ENCODE measurements at regions of chr20 and their contacts with region 1.

Region 1: DNA sequence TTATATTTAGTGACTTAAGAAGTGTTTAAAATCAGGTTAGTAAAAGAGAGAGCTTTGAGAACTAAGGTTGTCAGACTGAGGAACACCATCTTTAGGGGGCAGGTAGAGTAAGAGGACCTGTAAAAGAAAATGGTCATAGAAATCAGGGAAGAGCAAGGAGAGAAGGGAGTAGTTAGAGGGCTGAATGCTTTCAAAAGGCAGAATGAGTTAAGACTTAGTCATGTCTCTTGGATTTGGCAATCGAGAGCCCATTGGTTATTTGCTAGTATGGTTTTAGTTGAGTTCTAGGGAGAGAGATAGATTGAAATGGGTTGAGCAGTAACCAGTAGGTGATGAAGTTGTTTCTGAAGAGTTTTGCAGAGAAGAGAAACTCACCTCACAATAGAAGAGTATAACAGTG is 51.1 kb downstream of the RALGAPB start:
- DNase-seq: peak; percentile 71
- H3K4me3 Mint-ChIP-seq: no peak overlapping the region
- H3K27ac Mint-ChIP-seq: peak overlapping the region; percentile 3
- H3K4me1 Mint-ChIP-seq: peaks cover 14% of the 10 kb centered on the region
- H3K27me3 Mint-ChIP-seq: no peaks in the 10 kb centered on the region
- CTCF ChIP-seq: no peak

Region 2: DNA sequence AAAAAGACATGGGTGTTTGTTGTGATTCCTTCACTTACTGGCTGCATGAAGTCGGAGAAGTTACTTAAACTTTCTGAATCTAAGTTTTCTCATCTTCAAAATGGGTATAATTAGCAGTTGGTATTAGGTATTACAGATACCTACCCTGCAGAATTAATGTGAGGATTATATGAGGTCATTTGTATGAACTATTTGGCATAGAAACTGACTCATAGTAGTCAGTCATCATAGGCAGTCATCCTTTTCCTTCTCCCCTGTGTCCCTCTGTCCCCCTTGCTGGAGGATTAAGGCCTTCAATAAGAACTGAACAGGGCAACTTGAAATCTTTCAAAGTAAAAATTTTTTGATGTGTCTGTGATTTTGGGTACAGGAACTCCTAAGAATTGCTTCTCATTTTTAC is 24.8 kb before region 1 on chr20:
- CTCF ChIA-PET with region 1: interaction called, 5 read pairs
- POLR2A ChIA-PET with region 1: interaction called, 15 read pairs
- intact Hi-C with region 1: no loop called
- DNase-seq: no peak
- H3K4me3 Mint-ChIP-seq: no peak overlapping the region
- H3K27ac Mint-ChIP-seq: no peak overlapping the region
- H3K4me1 Mint-ChIP-seq: peaks cover 6% of the 10 kb centered on the region
- H3K27me3 Mint-ChIP-seq: no peaks in the 10 kb centered on the region
- CTCF ChIP-seq: no peak

Region 3: GRCh38 chr20:38534756-38535155 is 11.1 kb after region 1 on chr20:
- CTCF ChIA-PET with region 1: interaction called, 6 read pairs
- POLR2A ChIA-PET with region 1: interaction called, 18 read pairs
- intact Hi-C with region 1: no loop called
- DNase-seq: no peak
- H3K4me3 Mint-ChIP-seq: no peak overlapping the region
- H3K27ac Mint-ChIP-seq: no peak overlapping the region
- H3K4me1 Mint-ChIP-seq: peaks cover 12% of the 10 kb centered on the region
- H3K27me3 Mint-ChIP-seq: no peaks in the 10 kb centered on the region
- CTCF ChIP-seq: no peak

Measured in MCF 10A (cell line).